ENCODE measurements at regions of chr16 and their contacts with region 1.

Region 1: GRCh38 chr16:75617121-75617520 is 6.0 kb downstream of the ADAT1 start:
- DNase-seq: no peak
- ATAC-seq: no peak
- H3K4me3 ChIP-seq: no peak overlapping the region
- H3K27ac ChIP-seq: peak overlapping the region; percentile 78
- H3K4me1 ChIP-seq: peaks cover 40% of the 10 kb centered on the region
- H3K27me3 ChIP-seq: no peaks in the 10 kb centered on the region
- CTCF ChIP-seq: no peak

Region 2: GRCh38 chr16:75059418-75059817 is 557.7 kb before region 1 on chr16:
- CTCF ChIA-PET with region 1: no interaction called
- POLR2A ChIA-PET with region 1: interaction called, 45 read pairs
- intact Hi-C with region 1: no loop called
- DNase-seq: no peak
- ATAC-seq: no peak
- H3K4me3 ChIP-seq: no peak overlapping the region
- H3K27ac ChIP-seq: no peak overlapping the region
- H3K4me1 ChIP-seq: peaks cover 14% of the 10 kb centered on the region
- H3K27me3 ChIP-seq: no peaks in the 10 kb centered on the region
- CTCF ChIP-seq: no peak

Region 3: DNA sequence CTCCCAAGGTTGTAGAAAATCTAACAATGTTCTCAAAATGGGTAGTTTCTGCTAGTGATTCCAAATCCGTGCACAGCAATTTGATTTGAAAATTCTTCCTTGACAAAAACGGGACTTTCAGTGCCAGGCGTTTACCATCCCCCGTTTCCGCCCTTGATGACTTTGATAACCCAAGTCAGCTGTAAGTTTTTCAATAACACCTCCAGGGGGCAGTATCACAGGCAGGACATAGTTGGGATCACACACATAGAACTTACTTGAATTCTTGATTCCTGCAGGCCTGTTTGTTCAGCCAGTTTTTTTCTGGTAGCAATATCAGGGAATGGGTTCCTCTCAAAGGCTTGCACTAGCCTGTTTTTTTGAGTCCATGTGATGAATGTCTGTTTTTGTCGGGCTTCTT is 78.6 kb after region 1 on chr16:
- CTCF ChIA-PET with region 1: no interaction called
- POLR2A ChIA-PET with region 1: no interaction called
- intact Hi-C with region 1: no loop called
- DNase-seq: no peak
- ATAC-seq: no peak
- H3K4me3 ChIP-seq: no peak overlapping the region
- H3K27ac ChIP-seq: no peak overlapping the region
- H3K4me1 ChIP-seq: no peaks in the 10 kb centered on the region
- H3K27me3 ChIP-seq: no peaks in the 10 kb centered on the region
- CTCF ChIP-seq: peak; percentile 22; the same call in 1 of the 2 replicates

Region 4: DNA sequence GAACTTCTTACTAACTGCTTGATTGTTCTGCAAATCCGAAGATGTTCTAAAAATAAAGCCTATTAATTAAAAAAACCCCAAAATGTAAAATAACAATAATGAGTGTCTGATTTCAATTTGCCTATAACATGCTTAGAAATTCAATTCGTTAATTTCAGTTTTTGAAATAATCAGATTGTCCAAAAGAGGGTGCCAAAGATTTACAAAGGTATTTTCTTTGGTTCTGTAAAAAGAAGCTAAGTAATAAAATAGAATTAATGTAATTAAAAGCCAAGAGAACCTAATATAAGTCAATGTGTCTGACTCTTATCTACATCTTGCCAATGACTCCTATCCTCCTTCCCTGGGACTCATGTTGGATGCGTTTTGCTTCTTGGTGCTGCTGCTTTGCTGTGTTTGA is 184.2 kb after region 1 on chr16:
- CTCF ChIA-PET with region 1: no interaction called
- POLR2A ChIA-PET with region 1: no interaction called
- intact Hi-C with region 1: no loop called
- DNase-seq: peak; percentile 37
- ATAC-seq: no peak
- H3K4me3 ChIP-seq: no peak overlapping the region
- H3K27ac ChIP-seq: no peak overlapping the region
- H3K4me1 ChIP-seq: no peaks in the 10 kb centered on the region
- H3K27me3 ChIP-seq: peaks cover 18% of the 10 kb centered on the region
- CTCF ChIP-seq: peak; percentile 52

Measured in PC-3 (cell line).